ENCODE measurements at regions of chr17 and their contacts with region 1.

Region 1: GRCh38 chr17:27455914-27456680 is at the start of gene KSR1:
- DNase-seq: peak; percentile 53 to 90
- H3K4me3 ChIP-seq: peak within 1 kb of the TSS; percentile 50 to 82 (median 65)
- H3K27ac ChIP-seq: peak within 1 kb of the TSS; percentile 65; the same call in 1 of the 2 replicates
- H3K4me1 ChIP-seq: peaks cover 2 to 30% (median 11%) of the 10 kb centered on the region in 4 experiments
- H3K27me3 ChIP-seq: peaks cover 0 to 9% (median 5%) of the 10 kb centered on the region in 4 experiments; a peak in 4 of 7 replicates
- CTCF ChIP-seq: peak; percentile 62 to 78 (median 67)
- EP300 ChIP-seq: no peak
- POLR2A ChIP-seq: peak in 1 of 2 experiments; percentile 58; a peak in 2 of 3 replicates
- RAD21 ChIP-seq: peak; percentile 71 to 79
- total RNA-seq, gene KSR1: 33.9 and 34.7 TPM in 2 replicates

Region 2: GRCh38 chr17:27360507-27360906 is 95.6 kb before region 1 on chr17:
- CTCF ChIA-PET with region 1: no interaction called
- POLR2A ChIA-PET with region 1: no interaction called
- DNase-seq: no peak
- H3K4me3 ChIP-seq: no peak overlapping the region
- H3K27ac ChIP-seq: no peak overlapping the region
- H3K4me1 ChIP-seq: no peaks in the 10 kb centered on the region
- H3K27me3 ChIP-seq: no peaks in the 10 kb centered on the region
- CTCF ChIP-seq: no peak
- EP300 ChIP-seq: no peak
- POLR2A ChIP-seq: no peak
- RAD21 ChIP-seq: no peak

Region 3: GRCh38 chr17:27473748-27474609 is 17.9 kb after region 1 on chr17:
- CTCF ChIA-PET with region 1: interaction called, 12 read pairs
- POLR2A ChIA-PET with region 1: interaction called, 4 read pairs
- DNase-seq: no peak
- H3K4me3 ChIP-seq: no peak overlapping the region
- H3K27ac ChIP-seq: no peak overlapping the region
- H3K4me1 ChIP-seq: peaks cover 12 to 28% (median 24%) of the 10 kb centered on the region in 4 experiments
- H3K27me3 ChIP-seq: no peaks in the 10 kb centered on the region
- CTCF ChIP-seq: no peak
- EP300 ChIP-seq: no peak
- POLR2A ChIP-seq: no peak
- RAD21 ChIP-seq: no peak

Region 4: DNA sequence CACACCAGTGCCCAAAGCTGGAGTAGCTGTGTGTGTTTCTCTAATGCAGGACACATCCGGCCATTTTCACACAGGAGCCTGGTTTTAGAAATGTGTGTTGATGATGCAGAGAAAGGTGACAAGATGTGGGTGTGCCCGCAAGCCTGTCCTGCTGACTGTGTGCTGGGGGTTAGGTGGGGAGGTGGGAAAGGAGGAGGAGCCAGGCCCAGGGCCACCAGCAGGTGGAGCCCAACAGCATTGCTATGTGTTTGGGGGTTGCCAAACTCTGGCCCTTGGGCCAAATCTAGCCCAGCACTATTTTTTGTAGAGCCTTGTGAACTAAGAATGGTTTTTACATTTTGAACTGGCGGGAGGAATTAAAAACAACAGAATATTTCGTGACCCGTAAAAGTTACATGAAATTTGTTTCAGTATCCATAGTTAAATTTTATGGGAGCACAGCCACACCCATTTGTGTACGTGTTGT is 113.2 kb after region 1 on chr17:
- CTCF ChIA-PET with region 1: interaction called, 20 read pairs
- POLR2A ChIA-PET with region 1: interaction called, 4 read pairs
- DNase-seq: peak; percentile 51 to 81
- H3K4me3 ChIP-seq: no peak overlapping the region
- H3K27ac ChIP-seq: no peak overlapping the region
- H3K4me1 ChIP-seq: peaks cover 2 to 14% (median 6%) of the 10 kb centered on the region in 4 experiments; a peak in 5 of 7 replicates
- H3K27me3 ChIP-seq: no peaks in the 10 kb centered on the region
- CTCF ChIP-seq: peak; percentile 74 to 95 (median 92)
- EP300 ChIP-seq: no peak
- POLR2A ChIP-seq: no peak
- RAD21 ChIP-seq: peak; percentile 55 to 66